Gastrocnemius medialis (tissue), 4 donors: ENCODE measurements at regions of chr12 and their contacts with region 1.

Region 1: DNA sequence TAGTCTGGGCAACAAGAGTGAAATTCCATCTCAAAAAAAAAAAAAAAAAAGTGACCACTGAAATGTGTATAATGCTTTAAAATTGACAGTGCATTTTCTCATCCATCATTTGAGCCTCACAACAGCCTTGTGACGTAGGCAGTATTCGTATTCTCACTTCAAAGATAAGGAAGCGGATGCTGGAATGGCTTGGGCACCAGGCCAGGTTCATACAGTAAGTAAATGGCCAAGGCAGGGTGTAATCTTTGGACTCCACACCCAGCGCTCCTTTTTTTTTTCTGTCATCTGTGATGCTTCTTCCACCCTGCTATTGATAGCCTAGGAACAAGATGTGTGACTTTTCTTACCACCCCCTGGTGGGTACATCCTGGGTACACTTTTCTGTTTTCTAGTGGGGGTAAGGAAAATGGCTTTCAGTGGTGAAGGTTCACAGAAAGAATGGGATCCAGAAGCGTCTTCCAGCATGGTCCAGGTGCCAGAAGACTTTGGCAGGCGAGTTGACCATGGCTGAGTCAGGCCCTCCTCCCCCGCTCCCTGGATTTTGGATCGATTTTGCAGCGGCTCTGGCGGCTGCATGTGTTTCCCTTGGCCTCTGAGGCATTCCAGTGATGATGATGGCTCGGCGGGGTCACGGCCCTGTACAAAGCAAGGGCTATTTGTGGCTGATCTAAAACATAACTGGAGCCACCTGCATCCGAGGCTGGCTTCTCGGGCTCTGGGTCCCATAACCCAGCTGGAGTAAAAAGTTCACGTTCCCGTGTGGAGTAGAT is 110.6 kb downstream of the CACNA1C start:
- DNase-seq: peak; percentile 46 to 78
- ATAC-seq: peak; percentile 63 to 72
- H3K4me3 ChIP-seq: peak overlapping the region in 1 of 4 donors; percentile 33
- H3K27ac ChIP-seq: peak overlapping the region; percentile 26 to 61 (median 54)
- H3K4me1 ChIP-seq: peaks cover 7 to 11% of the 10 kb centered on the region in 2 donors
- H3K27me3 ChIP-seq: peaks cover 0 to 3% (median 0%) of the 10 kb centered on the region in 3 donors
- CTCF ChIP-seq: no peak
- POLR2A ChIP-seq: no peak

Region 2: GRCh38 chr12:2076196-2076570 is 87.2 kb before region 1 on chr12:
- in situ Hi-C with region 1: no loop called
- intact Hi-C with region 1: loop called (anchors 5 kb)
- DNase-seq: no peak
- ATAC-seq: no peak
- H3K4me3 ChIP-seq: no peak overlapping the region
- H3K27ac ChIP-seq: peak overlapping the region; percentile 29 to 52 (median 38)
- H3K4me1 ChIP-seq: no peaks in the 10 kb centered on the region
- H3K27me3 ChIP-seq: no peaks in the 10 kb centered on the region
- CTCF ChIP-seq: no peak
- POLR2A ChIP-seq: no peak

Region 3: DNA sequence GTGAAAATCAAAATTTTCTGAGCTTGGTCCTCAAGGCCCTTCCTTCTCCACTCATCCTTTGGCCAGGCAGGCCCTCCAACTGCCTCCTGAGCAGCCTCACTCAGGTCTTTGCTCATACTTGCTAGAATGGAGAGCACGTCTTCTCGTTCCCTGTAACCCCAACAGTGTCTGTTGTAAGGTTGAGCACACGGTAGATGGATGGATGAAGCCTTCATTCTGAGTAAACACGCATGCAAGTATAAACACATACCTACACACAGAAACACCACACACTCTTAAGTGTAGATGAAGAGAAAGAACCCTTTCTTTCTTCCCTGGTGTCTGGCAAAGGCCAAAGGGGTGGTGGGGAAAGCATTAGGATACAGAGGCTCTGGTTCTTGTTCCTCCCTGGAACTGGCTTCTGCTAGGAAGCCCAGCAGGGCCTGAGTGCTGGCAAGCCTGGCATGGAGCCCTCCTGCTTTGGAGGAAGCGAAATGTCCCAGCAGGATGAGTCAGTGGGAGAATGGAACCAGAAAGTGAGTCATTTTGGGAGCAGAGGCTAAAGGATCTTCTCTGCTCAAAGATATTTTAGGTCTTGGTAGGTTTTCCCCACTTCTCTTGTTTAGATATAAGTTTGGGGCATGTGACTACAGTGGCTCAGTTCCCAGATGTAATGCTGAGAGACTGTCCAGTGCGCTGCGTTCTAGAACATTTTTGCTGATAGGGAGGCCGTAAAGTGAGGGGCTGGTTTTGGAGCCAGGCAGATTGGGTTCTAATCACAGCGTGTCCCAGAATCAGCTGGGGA is 16.8 kb after region 1 on chr12:
- in situ Hi-C with region 1: no loop called
- intact Hi-C with region 1: no loop called
- DNase-seq: peak in 1 of 2 donors; percentile 45
- ATAC-seq: peak; percentile 36 to 66
- H3K4me3 ChIP-seq: no peak overlapping the region
- H3K27ac ChIP-seq: peak overlapping the region in 3 of 4 donors; percentile 20 to 59 (median 40)
- H3K4me1 ChIP-seq: no peaks in the 10 kb centered on the region
- H3K27me3 ChIP-seq: peaks cover 0 to 3% (median 0%) of the 10 kb centered on the region in 3 donors
- CTCF ChIP-seq: no peak
- POLR2A ChIP-seq: no peak

Region 4: DNA sequence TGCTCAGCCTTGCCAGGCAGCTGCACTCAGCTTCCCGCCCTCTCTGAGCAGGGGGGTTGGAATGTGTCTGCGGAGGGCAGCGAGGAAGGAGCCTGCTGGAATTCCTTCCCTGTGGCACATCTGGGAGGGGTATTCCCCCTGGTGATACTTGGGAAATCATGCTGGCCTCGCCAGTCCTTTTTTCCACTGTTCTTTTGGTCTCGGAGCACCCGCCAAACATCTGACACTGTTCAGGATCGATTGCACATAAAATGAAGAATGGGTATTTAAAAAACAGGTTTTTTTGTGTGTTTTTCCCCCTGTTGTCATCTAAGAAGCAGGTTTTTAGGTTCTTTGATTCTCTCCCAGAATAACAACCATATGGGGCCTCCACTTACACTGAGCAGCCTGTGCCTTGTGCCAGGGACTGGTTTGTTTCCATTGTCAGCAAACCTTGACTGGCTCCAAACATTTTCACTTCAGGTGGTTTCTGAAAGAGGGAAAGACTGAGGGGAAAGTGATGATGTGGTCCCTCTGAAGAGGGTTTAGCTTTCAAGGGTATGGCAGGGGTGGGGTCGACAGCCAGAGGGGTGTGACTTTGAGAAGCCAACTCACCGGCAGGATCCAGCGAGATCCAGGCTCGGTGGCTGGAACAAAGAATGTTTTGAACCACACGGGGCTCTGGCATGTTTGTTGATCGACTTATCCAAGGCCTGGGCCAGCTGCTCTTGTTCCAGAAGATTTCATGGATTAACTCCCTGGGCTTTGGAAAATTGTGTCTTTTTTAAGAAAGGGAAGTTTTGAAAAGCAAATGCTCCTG is 104.5 kb after region 1 on chr12:
- in situ Hi-C with region 1: no loop called
- intact Hi-C with region 1: loop called (anchors 10 kb)
- DNase-seq: peak; percentile 29 to 67
- ATAC-seq: peak in 1 of 2 donors; percentile 37
- H3K4me3 ChIP-seq: no peak overlapping the region
- H3K27ac ChIP-seq: peak overlapping the region in 2 of 4 donors; percentile 38 to 43
- H3K4me1 ChIP-seq: no peaks in the 10 kb centered on the region
- H3K27me3 ChIP-seq: peaks cover 13 to 23% (median 16%) of the 10 kb centered on the region in 3 donors
- CTCF ChIP-seq: no peak
- POLR2A ChIP-seq: no peak

Region 5: GRCh38 chr12:3073438-3074250 is 910.3 kb after region 1 on chr12:
- in situ Hi-C with region 1: no loop called
- intact Hi-C with region 1: no loop called
- DNase-seq: peak; percentile 54 to 78
- ATAC-seq: peak; percentile 41 to 57
- H3K4me3 ChIP-seq: no peak overlapping the region
- H3K27ac ChIP-seq: peak overlapping the region in 1 of 4 donors; percentile 33
- H3K4me1 ChIP-seq: peaks cover 13 to 28% of the 10 kb centered on the region in 2 donors
- H3K27me3 ChIP-seq: no peaks in the 10 kb centered on the region
- CTCF ChIP-seq: peak; percentile 87 to 99 (median 88)
- POLR2A ChIP-seq: no peak